ENCODE measurements at regions of chr2 and their contacts with region 1.

Region 1: GRCh38 chr2:62456721-62457539 is 49.1 kb downstream of the TMEM17 start:
- DNase-seq: peak; percentile 69
- H3K4me3 ChIP-seq: peak overlapping the region; percentile 21 to 60 (median 45)
- H3K27ac ChIP-seq: no peak overlapping the region
- H3K4me1 ChIP-seq: peaks cover 5% of the 10 kb centered on the region
- H3K27me3 ChIP-seq: no peaks in the 10 kb centered on the region
- CTCF ChIP-seq: peak; percentile 92 to 93
- POLR2A ChIP-seq: no peak

Region 2: DNA sequence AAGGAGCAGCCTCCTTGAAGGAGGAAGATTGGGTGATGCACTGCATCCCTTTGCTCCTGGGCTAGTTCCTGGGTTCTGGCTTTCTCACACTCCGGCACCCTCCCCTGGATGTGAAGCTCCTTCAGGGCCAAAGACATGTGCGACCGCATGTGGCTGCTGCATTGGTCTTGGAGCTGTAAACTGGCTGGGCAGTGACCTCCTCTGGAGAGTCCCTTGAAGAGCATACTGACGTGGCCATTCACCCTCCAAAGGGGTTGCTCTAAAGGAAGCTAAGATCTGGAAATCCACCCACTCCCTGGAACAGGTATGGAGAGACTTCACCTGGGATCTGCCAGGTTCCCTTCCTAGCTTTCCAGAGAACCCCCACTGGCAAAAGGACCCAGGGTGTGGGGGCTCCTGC is 13.0 kb before region 1 on chr2:
- CTCF ChIA-PET with region 1: interaction called, 13 read pairs
- POLR2A ChIA-PET with region 1: no interaction called
- dilution Hi-C with region 1: no loop called
- intact Hi-C with region 1: no loop called
- DNase-seq: no peak
- H3K4me3 ChIP-seq: no peak overlapping the region
- H3K27ac ChIP-seq: no peak overlapping the region
- H3K4me1 ChIP-seq: no peaks in the 10 kb centered on the region
- H3K27me3 ChIP-seq: peaks cover 12 to 13% of the 10 kb centered on the region in 2 experiments
- CTCF ChIP-seq: no peak
- POLR2A ChIP-seq: no peak

Region 3: DNA sequence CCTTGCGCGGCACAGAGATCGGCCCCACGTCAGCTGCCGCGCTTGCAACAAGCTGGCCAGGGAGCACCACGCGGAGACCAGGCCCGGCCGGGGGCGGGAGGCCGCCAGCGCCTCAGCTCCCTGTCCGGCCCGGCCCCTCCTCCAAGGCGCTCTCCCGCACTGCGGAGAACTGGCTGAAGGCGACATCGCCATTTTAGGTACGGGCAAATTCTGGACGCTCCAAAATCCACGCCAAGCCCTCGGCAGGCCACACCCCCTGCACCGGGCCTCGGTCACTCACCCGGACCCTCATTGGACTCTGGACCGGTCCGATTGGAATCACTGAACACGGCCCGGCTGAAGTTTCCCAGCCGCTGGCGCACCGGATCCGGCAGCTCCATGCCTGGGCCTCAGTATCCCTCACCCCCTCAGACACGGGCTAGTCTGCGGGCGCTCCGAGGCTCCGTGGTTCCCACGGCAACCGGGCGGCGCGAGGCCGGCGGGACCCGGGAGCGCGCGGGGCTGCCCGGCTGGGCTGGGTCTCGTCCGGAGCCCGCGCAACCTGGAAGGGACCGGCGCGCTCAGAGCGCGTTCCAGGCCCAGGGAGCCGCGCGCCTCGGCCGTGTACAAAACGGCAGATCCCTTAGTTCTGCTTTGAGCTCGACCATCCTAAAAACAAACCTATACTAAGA is 49.0 kb after region 1 on chr2 and contains the start of gene TMEM17:
- CTCF ChIA-PET with region 1: interaction called, 20 read pairs
- POLR2A ChIA-PET with region 1: no interaction called
- dilution Hi-C with region 1: no loop called
- intact Hi-C with region 1: loop called (anchors 2 kb)
- DNase-seq: peak; percentile 90
- H3K4me3 ChIP-seq: peak within 1 kb of the TSS; percentile 60 to 97 (median 96)
- H3K27ac ChIP-seq: peak within 1 kb of the TSS; percentile 84
- H3K4me1 ChIP-seq: peaks cover 7% of the 10 kb centered on the region
- H3K27me3 ChIP-seq: no peaks in the 10 kb centered on the region
- CTCF ChIP-seq: no peak
- POLR2A ChIP-seq: no peak
- total RNA-seq, gene TMEM17: 0.91 and 1.2 TPM in 2 replicates

Region 4: DNA sequence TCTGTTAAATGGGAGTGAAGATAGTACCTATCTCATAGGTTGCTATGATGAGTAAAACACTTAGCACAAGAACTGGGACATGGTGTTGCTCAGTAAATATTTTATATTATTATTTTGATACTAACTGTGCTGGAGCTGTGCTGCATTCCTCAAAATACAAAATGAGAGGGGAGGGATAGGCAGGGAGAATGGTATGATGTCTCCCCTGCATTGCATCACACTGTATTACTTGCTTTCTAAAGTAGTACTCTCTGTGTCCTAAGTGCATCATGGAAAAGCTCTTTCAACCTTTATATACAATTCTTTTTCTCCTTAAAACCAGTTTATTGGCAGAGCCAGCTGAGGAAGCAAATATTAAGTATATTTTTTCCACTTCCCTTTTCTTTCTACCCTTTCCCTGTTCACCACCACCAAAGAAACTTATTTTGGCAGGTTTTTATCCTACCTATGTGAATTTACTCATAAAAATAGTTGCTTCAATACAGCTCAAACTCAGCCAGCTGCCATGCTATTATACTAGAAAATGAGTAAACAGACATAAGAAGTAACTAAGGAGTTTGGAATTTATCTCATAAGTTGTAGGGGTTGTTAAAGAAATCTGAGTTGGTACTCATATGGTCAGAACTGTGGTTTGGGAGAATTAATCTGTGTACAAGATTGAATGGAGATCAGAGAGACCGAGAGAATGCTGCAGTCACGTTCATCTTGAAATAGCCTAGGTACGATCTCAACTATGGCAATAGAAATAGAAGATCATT is 308.9 kb after region 1 on chr2:
- CTCF ChIA-PET with region 1: interaction called, 306 read pairs
- POLR2A ChIA-PET with region 1: no interaction called
- dilution Hi-C with region 1: no loop called
- intact Hi-C with region 1: no loop called
- DNase-seq: no peak
- H3K4me3 ChIP-seq: no peak overlapping the region
- H3K27ac ChIP-seq: no peak overlapping the region
- H3K4me1 ChIP-seq: no peaks in the 10 kb centered on the region
- H3K27me3 ChIP-seq: no peaks in the 10 kb centered on the region
- CTCF ChIP-seq: no peak
- POLR2A ChIP-seq: no peak

Region 5: GRCh38 chr2:62808554-62808953 is 351.6 kb after region 1 on chr2:
- CTCF ChIA-PET with region 1: no interaction called
- POLR2A ChIA-PET with region 1: no interaction called
- dilution Hi-C with region 1: no loop called
- intact Hi-C with region 1: no loop called
- DNase-seq: no peak
- H3K4me3 ChIP-seq: no peak overlapping the region
- H3K27ac ChIP-seq: no peak overlapping the region
- H3K4me1 ChIP-seq: no peaks in the 10 kb centered on the region
- H3K27me3 ChIP-seq: no peaks in the 10 kb centered on the region
- CTCF ChIP-seq: no peak
- POLR2A ChIP-seq: no peak

Region 6: GRCh38 chr2:63023444-63023843 is 566.5 kb after region 1 on chr2:
- CTCF ChIA-PET with region 1: interaction called, 10 read pairs
- POLR2A ChIA-PET with region 1: no interaction called
- dilution Hi-C with region 1: no loop called
- intact Hi-C with region 1: loop called (anchors 5 kb)
- DNase-seq: peak; percentile 67
- H3K4me3 ChIP-seq: no peak overlapping the region
- H3K27ac ChIP-seq: no peak overlapping the region
- H3K4me1 ChIP-seq: peaks cover 3% of the 10 kb centered on the region
- H3K27me3 ChIP-seq: no peaks in the 10 kb centered on the region
- CTCF ChIP-seq: peak; percentile 42 to 43
- POLR2A ChIP-seq: no peak

Region 7: DNA sequence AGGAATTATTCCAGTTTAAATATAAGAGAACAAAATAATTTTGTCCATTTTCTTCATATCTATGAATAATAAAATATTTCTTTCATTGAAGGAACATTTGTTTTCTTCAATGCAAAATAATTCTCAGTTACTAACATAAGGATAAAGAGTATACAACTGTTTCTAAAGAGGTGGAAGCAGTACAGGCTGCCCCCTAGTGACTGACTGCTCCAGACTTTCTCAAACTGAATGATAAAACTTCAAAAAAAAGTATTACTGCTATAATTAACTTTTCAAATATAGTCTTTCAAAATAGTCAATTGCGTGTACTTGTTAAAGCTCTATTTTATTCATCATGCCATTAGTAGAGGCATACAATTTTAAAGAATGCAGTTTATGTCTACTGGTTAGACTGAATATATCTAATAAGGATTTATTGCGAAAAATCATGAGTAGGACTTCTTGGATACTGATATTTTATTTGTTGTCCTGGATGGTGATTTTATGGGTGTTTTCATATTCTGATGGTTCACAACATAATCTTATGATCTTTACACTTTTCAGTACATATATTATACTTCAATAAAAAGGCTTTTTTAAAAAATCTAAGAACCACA is 1031.3 kb after region 1 on chr2:
- CTCF ChIA-PET with region 1: interaction called, 20 read pairs
- POLR2A ChIA-PET with region 1: no interaction called
- dilution Hi-C with region 1: no loop called
- intact Hi-C with region 1: loop called (anchors 5 kb)
- DNase-seq: peak; percentile 48
- H3K4me3 ChIP-seq: no peak overlapping the region
- H3K27ac ChIP-seq: no peak overlapping the region
- H3K4me1 ChIP-seq: no peaks in the 10 kb centered on the region
- H3K27me3 ChIP-seq: no peaks in the 10 kb centered on the region
- CTCF ChIP-seq: peak; percentile 34 to 62
- POLR2A ChIP-seq: no peak

Measured in endothelial cell of umbilical vein (primary cell).